ENCODE measurements at regions of chr12 and their contacts with region 1.

Region 1: DNA sequence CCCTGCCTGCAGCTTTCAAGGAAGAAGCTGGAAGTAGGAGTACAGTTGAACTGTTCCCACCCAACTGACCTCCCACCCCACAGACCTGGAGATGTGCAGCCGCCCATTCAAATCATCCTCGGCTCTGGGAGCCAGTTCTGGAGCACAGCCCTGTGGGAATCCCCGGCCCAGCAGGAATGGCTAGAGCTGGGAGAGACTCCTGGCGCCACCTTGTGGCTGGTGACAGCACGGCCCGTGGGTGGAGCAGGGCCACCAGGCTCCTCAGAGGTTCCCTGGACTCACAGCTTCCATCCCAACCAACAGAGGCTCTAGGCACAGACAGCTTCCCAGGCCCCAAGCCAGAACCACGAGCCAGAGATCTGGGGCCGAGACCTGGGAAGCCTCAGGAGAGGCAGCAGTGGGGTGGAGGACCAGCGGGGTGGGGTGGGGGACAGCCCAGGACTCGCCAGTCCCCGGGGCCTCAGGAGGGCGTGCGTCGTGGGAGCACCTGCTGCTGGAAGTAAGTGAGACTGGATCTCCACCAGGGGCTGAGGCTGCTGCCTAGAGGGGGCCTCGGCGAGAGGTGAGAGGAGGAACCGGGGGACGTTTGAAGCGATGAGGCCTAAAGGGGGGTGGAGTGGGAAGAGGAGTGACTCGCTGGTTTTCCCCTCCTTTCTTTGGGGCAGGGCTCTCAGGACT is 43.4 kb downstream of the RNF34 start:
- DNase-seq: peak; percentile 44 to 60 (median 50)
- H3K4me3 ChIP-seq: no peak overlapping the region
- H3K4me3 Mint-ChIP-seq: no peak overlapping the region
- H3K27ac ChIP-seq: no peak overlapping the region
- H3K27ac Mint-ChIP-seq: peak overlapping the region in 4 of 7 donors; percentile 42 to 87 (median 68)
- H3K4me1 ChIP-seq: no peaks in the 10 kb centered on the region
- H3K4me1 Mint-ChIP-seq: peaks cover 0 to 5% (median 3%) of the 10 kb centered on the region in 4 donors
- H3K27me3 ChIP-seq: no peaks in the 10 kb centered on the region
- H3K27me3 Mint-ChIP-seq: no peaks in the 10 kb centered on the region

Region 2: DNA sequence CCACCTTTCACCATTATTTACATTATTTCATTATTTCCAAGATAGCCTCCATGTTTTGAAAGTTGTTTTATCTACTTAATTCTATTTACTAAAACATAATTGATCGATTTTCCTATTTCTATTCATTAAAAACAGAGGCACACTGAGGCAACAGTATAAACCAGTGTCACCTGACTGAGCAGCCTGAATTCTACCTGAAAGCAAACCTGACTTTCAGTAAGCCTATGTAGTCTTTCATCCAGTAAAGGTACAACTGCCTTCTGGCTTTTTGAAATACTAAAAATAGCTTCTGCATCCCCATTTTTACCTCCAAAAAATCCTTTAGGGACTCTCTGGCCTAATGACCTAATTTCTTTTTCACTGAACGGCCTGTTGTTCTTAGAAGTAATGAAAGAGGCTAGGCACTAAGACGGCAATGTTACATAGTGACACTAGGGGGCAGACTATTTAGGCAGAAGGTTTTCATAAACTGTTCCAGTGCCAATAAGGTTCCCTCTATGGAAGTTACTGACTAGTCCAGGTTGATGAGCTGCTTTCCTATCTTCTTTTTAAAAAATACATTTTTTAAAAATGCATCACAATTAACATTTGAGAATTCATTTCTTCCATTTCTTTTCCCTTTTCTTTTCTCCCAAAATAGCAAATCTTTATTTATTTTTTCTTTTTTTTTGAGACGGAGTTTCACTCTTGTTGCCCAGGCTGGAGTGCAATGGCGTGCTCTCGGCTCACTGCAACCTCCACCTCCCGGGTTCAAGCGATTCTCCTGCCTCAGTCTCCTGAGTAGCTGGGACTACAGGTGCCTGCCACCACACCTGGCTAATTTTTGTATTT is 108.6 kb before region 1 on chr12:
- CTCF ChIA-PET with region 1: interaction called, 93 read pairs
- POLR2A ChIA-PET with region 1: no interaction called
- intact Hi-C with region 1: loop called (anchors 1 kb)
- DNase-seq: peak in 4 of 5 donors; percentile 52 to 58 (median 56)
- H3K4me3 ChIP-seq: no peak overlapping the region
- H3K4me3 Mint-ChIP-seq: no peak overlapping the region
- H3K27ac ChIP-seq: peak overlapping the region; percentile 17
- H3K27ac Mint-ChIP-seq: peak overlapping the region in 6 of 7 donors; percentile 36 to 89 (median 60)
- H3K4me1 ChIP-seq: peaks cover 4% of the 10 kb centered on the region
- H3K4me1 Mint-ChIP-seq: peaks cover 2 to 6% (median 4%) of the 10 kb centered on the region in 4 donors
- H3K27me3 ChIP-seq: no peaks in the 10 kb centered on the region
- H3K27me3 Mint-ChIP-seq: no peaks in the 10 kb centered on the region

Region 3: GRCh38 chr12:121345151-121345815 is 98.0 kb before region 1 on chr12:
- CTCF ChIA-PET with region 1: interaction called, 11 read pairs
- POLR2A ChIA-PET with region 1: no interaction called
- intact Hi-C with region 1: no loop called
- DNase-seq: no peak
- H3K4me3 ChIP-seq: no peak overlapping the region
- H3K4me3 Mint-ChIP-seq: no peak overlapping the region
- H3K27ac ChIP-seq: no peak overlapping the region
- H3K27ac Mint-ChIP-seq: peak overlapping the region in 6 of 7 donors; percentile 3 to 77 (median 40)
- H3K4me1 ChIP-seq: peaks cover 6% of the 10 kb centered on the region
- H3K4me1 Mint-ChIP-seq: peaks cover 13 to 32% (median 18%) of the 10 kb centered on the region in 4 donors
- H3K27me3 ChIP-seq: no peaks in the 10 kb centered on the region
- H3K27me3 Mint-ChIP-seq: no peaks in the 10 kb centered on the region

Region 4: DNA sequence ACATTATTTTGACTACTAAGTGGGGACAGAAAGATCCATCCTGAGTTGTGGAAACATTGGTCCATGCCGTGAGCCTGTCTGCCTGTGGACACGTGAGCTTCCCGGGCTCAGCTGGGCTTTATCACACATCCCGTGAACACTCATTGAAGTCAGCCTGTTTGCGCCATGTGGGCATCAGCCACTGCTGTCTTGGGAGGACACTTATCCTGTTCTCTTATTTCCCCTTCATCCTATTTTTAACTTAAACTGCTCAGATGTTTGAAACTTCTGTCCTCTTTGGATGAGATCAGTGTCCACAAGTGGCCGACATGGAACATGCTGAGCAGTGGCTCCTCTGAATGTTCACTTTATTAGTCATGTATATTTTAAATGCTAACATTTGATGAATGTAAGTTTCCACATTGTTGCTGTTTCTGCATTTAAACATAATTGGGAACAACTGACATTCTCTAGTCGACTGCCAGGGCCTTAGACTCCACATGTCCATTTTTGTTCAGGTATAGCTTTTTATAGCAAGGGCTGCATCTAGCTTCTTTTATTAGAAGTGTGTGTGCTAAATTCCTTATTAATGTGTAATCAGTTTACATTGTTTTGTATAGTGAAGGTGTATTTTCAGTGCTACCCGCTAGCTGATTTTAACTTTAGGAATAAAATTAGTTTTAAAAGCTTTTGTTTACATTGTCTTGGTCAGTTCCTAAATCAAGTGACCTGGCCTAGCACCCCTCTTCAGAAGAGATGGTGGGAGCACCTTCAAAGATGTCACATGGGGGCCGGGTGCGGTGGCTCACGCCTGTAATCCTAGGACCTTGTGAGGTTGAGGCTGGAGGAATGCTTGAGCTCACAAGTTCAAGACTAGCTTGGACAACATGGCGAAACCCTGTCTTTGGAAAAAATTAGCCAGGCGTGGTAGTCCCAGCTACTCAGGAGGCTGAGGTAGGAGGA is 19.4 kb before region 1 on chr12:
- CTCF ChIA-PET with region 1: interaction called, 24 read pairs
- POLR2A ChIA-PET with region 1: no interaction called
- intact Hi-C with region 1: no loop called
- DNase-seq: no peak
- H3K4me3 ChIP-seq: no peak overlapping the region
- H3K4me3 Mint-ChIP-seq: no peak overlapping the region
- H3K27ac ChIP-seq: no peak overlapping the region
- H3K27ac Mint-ChIP-seq: peak overlapping the region in 3 of 7 donors; percentile 35 to 46 (median 42)
- H3K4me1 ChIP-seq: no peaks in the 10 kb centered on the region
- H3K4me1 Mint-ChIP-seq: peaks cover 0 to 9% (median 4%) of the 10 kb centered on the region in 4 donors
- H3K27me3 ChIP-seq: no peaks in the 10 kb centered on the region
- H3K27me3 Mint-ChIP-seq: no peaks in the 10 kb centered on the region

Region 5: DNA sequence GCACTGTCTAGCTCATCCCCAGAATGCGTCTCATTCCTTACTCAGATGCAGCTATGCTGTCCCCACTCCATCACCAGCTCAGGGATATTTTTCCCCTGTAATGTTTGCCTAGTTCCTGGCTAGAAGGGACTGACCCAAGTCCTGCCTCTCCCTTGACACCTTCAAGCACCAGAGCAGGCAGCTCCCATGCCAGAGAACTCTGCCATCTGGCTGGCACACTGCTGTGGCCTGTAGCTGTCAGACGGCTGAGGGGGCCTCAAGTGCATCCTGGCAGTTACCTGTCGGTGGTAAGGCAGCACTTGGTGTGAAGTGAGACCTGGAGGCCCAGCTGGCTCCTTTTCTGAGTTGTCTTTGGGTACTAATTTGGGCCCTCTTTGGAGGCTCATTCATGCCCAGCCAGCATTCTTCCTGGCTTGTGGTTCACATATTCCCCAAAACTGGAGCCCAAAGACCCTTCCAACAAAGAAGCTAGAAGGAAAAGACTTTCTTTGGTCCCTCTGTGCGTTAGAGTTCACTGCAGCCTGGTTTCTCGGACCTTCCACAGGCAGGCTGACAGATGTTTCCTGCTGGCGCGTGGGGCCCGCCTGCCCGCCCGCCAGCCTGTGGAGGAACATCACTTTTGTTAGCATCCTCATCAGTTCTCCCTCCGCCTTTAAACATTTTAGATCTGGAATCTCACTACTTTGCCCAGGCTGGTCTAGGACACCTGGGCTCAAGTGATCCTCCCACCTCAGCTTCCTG is 10.4 kb before region 1 on chr12:
- CTCF ChIA-PET with region 1: interaction called, 24 read pairs
- POLR2A ChIA-PET with region 1: no interaction called
- intact Hi-C with region 1: no loop called
- DNase-seq: peak in 1 of 5 donors; percentile 22
- H3K4me3 ChIP-seq: no peak overlapping the region
- H3K4me3 Mint-ChIP-seq: peak overlapping the region in 1 of 8 donors; percentile 63
- H3K27ac ChIP-seq: no peak overlapping the region
- H3K27ac Mint-ChIP-seq: peak overlapping the region; percentile 3 to 81 (median 64)
- H3K4me1 ChIP-seq: no peaks in the 10 kb centered on the region
- H3K4me1 Mint-ChIP-seq: peaks cover 0 to 6% (median 1%) of the 10 kb centered on the region in 4 donors
- H3K27me3 ChIP-seq: no peaks in the 10 kb centered on the region
- H3K27me3 Mint-ChIP-seq: no peaks in the 10 kb centered on the region

Region 6: DNA sequence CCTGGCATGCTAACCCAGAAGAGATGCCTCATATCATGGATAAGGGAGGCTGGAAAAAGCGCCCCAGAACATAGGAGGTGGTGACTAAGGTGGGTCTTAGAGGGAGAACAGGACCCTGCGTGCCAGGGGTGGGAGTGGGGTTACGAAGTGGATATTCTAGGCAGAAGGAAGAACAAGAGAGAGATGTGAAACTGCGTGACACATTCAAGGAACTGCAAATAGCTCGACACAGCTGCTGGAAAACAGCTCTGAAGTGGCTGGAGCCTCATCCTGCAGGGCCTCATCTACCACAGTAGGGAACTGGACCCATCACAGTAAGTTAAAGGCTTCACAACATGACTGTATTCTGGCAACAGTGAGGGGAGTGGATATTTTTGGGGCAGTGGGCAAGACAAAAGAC is 17.7 kb after region 1 on chr12:
- CTCF ChIA-PET with region 1: interaction called, 33 read pairs
- POLR2A ChIA-PET with region 1: interaction called, 3 read pairs
- intact Hi-C with region 1: no loop called
- DNase-seq: no peak
- H3K4me3 ChIP-seq: no peak overlapping the region
- H3K4me3 Mint-ChIP-seq: peak overlapping the region in 1 of 8 donors; percentile 8
- H3K27ac ChIP-seq: no peak overlapping the region
- H3K27ac Mint-ChIP-seq: peak overlapping the region in 1 of 7 donors; percentile 12
- H3K4me1 ChIP-seq: peaks cover 20% of the 10 kb centered on the region
- H3K4me1 Mint-ChIP-seq: peaks cover 34 to 59% (median 40%) of the 10 kb centered on the region in 4 donors
- H3K27me3 ChIP-seq: no peaks in the 10 kb centered on the region
- H3K27me3 Mint-ChIP-seq: no peaks in the 10 kb centered on the region

Region 7: DNA sequence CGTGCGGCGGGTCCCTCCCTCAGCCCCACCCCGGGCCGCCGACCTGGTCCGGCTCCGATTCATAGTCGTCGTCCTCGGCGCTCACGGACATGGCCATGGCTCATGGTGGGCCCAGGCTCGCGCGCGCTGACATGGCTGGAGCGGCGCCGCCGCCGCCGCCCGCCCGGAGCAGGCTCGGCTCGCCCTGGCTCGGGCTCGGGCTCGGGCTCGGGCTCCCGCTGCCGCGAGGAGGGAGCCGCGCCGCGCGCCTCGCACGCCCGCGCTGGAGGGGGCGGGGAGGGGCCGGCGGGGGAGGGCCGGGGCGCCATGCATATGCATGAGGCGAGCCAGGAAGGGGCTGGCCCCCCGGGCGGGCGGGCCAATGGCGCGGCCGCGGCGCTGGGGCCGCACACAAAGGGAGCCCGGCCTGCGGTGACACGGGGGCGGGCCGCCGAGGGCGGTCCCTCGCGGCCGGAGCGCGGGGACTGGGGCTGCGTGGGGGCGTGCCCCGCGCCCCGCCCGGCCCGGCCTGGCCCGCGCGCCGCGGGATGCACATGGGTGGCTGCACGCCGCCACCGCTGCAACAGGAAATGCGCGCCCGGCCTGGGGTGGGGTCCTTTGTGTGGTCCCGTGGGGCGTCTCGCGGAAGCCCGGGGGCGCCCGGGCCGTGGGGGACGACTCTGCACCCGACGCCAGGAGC is 23.9 kb after region 1 on chr12:
- CTCF ChIA-PET with region 1: interaction called, 12 read pairs
- POLR2A ChIA-PET with region 1: interaction called, 3 read pairs
- intact Hi-C with region 1: no loop called
- DNase-seq: peak; percentile 85 to 91 (median 87)
- H3K4me3 ChIP-seq: peak overlapping the region in 1 of 2 donors; percentile 35
- H3K4me3 Mint-ChIP-seq: peak overlapping the region in 5 of 8 donors; percentile 21 to 74 (median 47)
- H3K27ac ChIP-seq: peak overlapping the region; percentile 42
- H3K27ac Mint-ChIP-seq: no peak overlapping the region
- H3K4me1 ChIP-seq: peaks cover 25% of the 10 kb centered on the region
- H3K4me1 Mint-ChIP-seq: peaks cover 17 to 30% (median 22%) of the 10 kb centered on the region in 4 donors
- H3K27me3 ChIP-seq: no peaks in the 10 kb centered on the region
- H3K27me3 Mint-ChIP-seq: no peaks in the 10 kb centered on the region